Upper lobe of right lung (tissue), 1 donor: ENCODE measurements at regions of chr1 and their contacts with region 1.

Region 1: GRCh38 chr1:15304701-15305467 is 57.9 kb downstream of the FHAD1 start:
- DNase-seq: peak; percentile 82
- ATAC-seq: peak; percentile 88
- H3K4me3 ChIP-seq: no peak overlapping the region
- H3K27ac ChIP-seq: no peak overlapping the region
- H3K4me1 ChIP-seq: no peaks in the 10 kb centered on the region
- H3K27me3 ChIP-seq: no peaks in the 10 kb centered on the region
- CTCF ChIP-seq: peak; percentile 92

Region 2: GRCh38 chr1:15139654-15140350 is 165.1 kb before region 1 on chr1:
- intact Hi-C with region 1: loop called (anchors 10 kb)
- DNase-seq: no peak
- ATAC-seq: no peak
- H3K4me3 ChIP-seq: no peak overlapping the region
- H3K27ac ChIP-seq: no peak overlapping the region
- H3K4me1 ChIP-seq: no peaks in the 10 kb centered on the region
- H3K27me3 ChIP-seq: no peaks in the 10 kb centered on the region
- CTCF ChIP-seq: no peak